Endothelial cell of umbilical vein (primary cell): ENCODE measurements at regions of chr5 and their contacts with region 1.

Region 1: GRCh38 chr5:181223058-181223728 is at the start of gene TRIM41:
- DNase-seq: peak; percentile 98
- H3K4me3 ChIP-seq: peak within 1 kb of the TSS; percentile 21 to 76 (median 64)
- H3K27ac ChIP-seq: peak within 1 kb of the TSS; percentile 88
- H3K4me1 ChIP-seq: peaks cover 10% of the 10 kb centered on the region
- H3K27me3 ChIP-seq: no peaks in the 10 kb centered on the region
- CTCF ChIP-seq: peak; percentile 4 to 26
- POLR2A ChIP-seq: no peak
- total RNA-seq, gene TRIM41: 17.3 and 19.9 TPM in 2 replicates

Region 2: GRCh38 chr5:181167814-181168488 is 55.2 kb before region 1 on chr5:
- CTCF ChIA-PET with region 1: no interaction called
- POLR2A ChIA-PET with region 1: no interaction called
- dilution Hi-C with region 1: no loop called
- intact Hi-C with region 1: loop called (anchors 2 kb)
- DNase-seq: no peak
- H3K4me3 ChIP-seq: no peak overlapping the region
- H3K27ac ChIP-seq: no peak overlapping the region
- H3K4me1 ChIP-seq: peaks cover 12% of the 10 kb centered on the region
- H3K27me3 ChIP-seq: peaks cover 21 to 33% of the 10 kb centered on the region in 2 experiments
- CTCF ChIP-seq: peak; percentile 45 to 47
- POLR2A ChIP-seq: no peak

Region 3: GRCh38 chr5:181197326-181197951 is 25.8 kb before region 1 on chr5:
- CTCF ChIA-PET with region 1: no interaction called
- POLR2A ChIA-PET with region 1: no interaction called
- dilution Hi-C with region 1: no loop called
- intact Hi-C with region 1: no loop called
- DNase-seq: no peak
- H3K4me3 ChIP-seq: no peak overlapping the region
- H3K27ac ChIP-seq: no peak overlapping the region
- H3K4me1 ChIP-seq: peaks cover 4% of the 10 kb centered on the region
- H3K27me3 ChIP-seq: no peaks in the 10 kb centered on the region
- CTCF ChIP-seq: no peak
- POLR2A ChIP-seq: no peak

Region 4: DNA sequence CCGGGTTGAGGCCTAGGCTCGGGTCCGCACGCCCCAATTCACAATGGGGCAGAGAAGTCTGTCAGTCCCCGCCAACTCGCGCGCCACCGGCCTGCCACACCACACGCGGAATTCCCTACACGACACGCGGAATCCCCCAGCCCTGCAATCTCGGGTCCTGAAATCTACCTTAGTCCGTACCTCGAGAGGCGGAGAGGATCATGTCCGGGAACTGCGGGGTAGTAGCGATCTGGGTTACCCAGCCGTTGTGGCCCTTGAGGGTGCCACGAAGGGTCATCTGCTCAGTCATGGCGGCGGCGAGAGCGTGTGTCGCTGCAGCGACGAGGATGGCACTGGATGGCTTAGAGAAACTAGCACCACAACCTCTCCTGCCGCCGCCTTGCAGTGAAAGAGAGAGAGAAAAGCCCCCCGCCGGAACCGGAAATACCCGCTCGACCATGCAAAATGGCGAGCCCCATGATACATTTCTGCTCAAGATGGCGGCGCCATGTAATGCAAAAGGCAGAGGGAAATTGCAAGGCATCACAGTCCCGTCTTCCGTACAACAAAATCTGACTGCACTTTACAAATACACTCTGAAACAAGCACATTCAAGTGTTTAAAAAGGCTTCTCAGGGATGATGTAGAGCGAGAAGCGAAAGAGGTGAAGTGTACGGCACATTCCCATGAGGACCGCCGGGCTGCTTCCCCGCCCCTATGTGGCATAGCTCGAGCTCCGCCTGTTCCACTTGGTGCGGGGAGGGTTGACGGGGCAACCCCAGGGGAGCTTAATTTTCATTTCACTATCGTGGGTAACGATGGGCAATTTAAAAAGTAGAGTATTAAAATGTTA is 20.5 kb after region 1 on chr5 and contains the start of gene RACK1:
- CTCF ChIA-PET with region 1: interaction called, 4 read pairs
- POLR2A ChIA-PET with region 1: interaction called, 4 read pairs
- dilution Hi-C with region 1: no loop called
- intact Hi-C with region 1: loop called (anchors 1 kb)
- DNase-seq: peak; percentile 95
- H3K4me3 ChIP-seq: peak within 1 kb of the TSS; percentile 66 to 96 (median 89)
- H3K27ac ChIP-seq: peak within 1 kb of the TSS; percentile 91
- H3K4me1 ChIP-seq: peaks cover 42% of the 10 kb centered on the region
- H3K27me3 ChIP-seq: no peaks in the 10 kb centered on the region
- CTCF ChIP-seq: no peak
- POLR2A ChIP-seq: peak; percentile 93
- total RNA-seq, gene RACK1: 1,910 and 2,029 TPM in 2 replicates